ENCODE measurements at regions of chr19 and their contacts with region 1.

Region 1: DNA sequence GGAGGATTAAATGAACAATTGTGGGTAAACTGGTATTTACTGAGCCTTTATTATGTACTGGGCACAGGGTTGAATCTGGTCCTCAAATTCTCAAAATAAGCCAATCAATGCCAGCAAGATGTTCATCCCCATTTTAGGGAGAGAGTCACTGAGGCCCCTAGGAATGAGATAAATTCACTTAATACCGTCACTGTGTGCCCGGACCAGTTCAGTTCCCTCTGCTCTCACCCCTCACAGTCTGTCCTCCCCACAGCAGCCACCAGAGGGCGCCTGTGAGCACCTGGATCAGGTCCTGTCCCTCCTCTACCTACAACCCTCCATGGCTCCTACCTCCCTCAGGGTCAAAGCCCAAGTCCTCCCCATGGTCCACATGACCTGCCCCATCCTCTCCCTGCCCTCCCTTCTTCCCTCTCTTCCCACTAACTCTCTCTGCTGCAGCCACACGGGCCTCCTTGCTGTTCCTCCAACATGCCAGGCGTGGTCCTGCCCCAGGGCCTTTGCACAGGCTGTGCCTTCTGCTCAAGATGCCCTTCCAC is 42.0 kb upstream of the NFIC start:
- DNase-seq: no peak
- H3K4me3 ChIP-seq: no peak overlapping the region
- H3K27ac ChIP-seq: no peak overlapping the region
- H3K4me1 ChIP-seq: no peaks in the 10 kb centered on the region
- H3K27me3 ChIP-seq: no peaks in the 10 kb centered on the region
- CTCF ChIP-seq: peak; percentile 25 to 60 (median 46)
- POLR2A ChIP-seq: no peak

Region 2: GRCh38 chr19:2798733-2799132 is 525.7 kb before region 1 on chr19:
- intact Hi-C with region 1: no loop called
- DNase-seq: no peak
- H3K4me3 ChIP-seq: no peak overlapping the region
- H3K27ac ChIP-seq: no peak overlapping the region
- H3K4me1 ChIP-seq: no peaks in the 10 kb centered on the region
- H3K27me3 ChIP-seq: no peaks in the 10 kb centered on the region
- CTCF ChIP-seq: no peak
- POLR2A ChIP-seq: no peak

Region 3: DNA sequence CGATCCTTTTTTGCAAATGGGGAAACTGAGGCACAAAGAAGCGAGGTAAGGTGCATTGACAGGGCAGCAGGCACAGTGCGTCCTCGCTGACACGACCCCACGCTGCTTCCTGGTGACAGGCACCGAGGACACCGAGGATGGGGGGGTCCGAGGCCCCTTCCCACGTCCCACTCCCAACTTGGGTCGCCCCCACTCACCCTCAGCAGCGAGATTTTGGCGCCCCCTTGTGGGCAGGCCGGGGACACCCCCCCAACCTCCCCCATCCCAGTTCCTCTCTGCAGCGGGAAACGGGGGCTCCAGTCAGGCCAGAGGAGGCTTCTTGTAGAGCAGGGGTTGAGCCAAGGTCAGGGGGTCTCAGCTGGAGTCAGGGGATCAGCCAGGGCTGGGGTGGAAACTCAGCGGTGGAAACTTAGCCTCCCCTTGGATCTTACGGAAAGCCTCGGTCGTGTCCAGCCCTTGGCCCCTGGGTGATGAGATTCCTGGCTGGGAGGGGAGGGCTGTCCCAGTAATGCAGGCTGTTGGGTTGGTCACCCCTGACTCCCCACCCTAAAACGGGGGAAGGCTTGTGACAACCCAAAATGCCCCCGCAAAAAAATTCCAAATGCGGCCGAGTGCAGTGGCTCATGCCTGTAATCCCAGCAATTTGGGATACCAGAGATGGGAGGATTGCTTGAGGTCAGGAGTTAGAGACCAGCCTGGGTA is 147.7 kb after region 1 on chr19:
- intact Hi-C with region 1: loop called (anchors 5 kb)
- DNase-seq: no peak
- H3K4me3 ChIP-seq: no peak overlapping the region
- H3K27ac ChIP-seq: no peak overlapping the region
- H3K4me1 ChIP-seq: peaks cover 15% of the 10 kb centered on the region
- H3K27me3 ChIP-seq: no peaks in the 10 kb centered on the region
- CTCF ChIP-seq: peak; percentile 59 to 90 (median 87)
- POLR2A ChIP-seq: no peak